ENCODE measurements at regions of chr12 and their contacts with region 1.

Region 1: DNA sequence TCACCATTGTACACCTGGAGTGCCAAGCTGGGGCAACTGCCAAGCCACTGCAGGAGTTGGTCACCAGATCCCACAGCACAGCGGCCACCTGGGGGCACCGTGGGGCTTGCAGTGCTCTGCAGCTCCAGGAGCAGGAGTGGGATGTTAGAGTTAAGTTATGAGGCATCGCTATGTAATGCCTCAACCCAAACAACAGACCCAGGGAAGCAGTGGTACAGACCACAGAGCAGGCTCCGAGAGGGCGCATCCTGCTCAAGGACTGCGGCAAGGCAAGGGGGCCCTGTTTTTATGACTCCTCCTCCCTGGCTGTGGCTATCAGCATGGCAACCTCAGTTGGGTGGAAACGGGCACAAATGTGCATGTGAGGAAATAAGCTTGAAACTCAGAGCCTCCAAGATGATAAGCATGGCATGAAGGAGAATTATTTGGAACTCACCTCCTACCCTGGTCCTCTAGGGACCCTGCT is 63.1 kb downstream of the ARL6IP4 start:
- DNase-seq: peak; percentile 75 to 86
- ATAC-seq: peak; percentile 85 to 94
- H3K4me3 ChIP-seq: no peak overlapping the region
- H3K27ac ChIP-seq: peak overlapping the region in 1 of 4 donors; percentile 19
- H3K4me1 ChIP-seq: peaks cover 11 to 16% of the 10 kb centered on the region in 2 donors
- H3K27me3 ChIP-seq: no peaks in the 10 kb centered on the region
- CTCF ChIP-seq: peak; percentile 54 to 87 (median 73)
- POLR2A ChIP-seq: no peak

Region 2: GRCh38 chr12:122813310-122813713 is 230.3 kb before region 1 on chr12:
- in situ Hi-C with region 1: no loop called
- intact Hi-C with region 1: no loop called
- DNase-seq: no peak
- ATAC-seq: no peak
- H3K4me3 ChIP-seq: no peak overlapping the region
- H3K27ac ChIP-seq: no peak overlapping the region
- H3K4me1 ChIP-seq: no peaks in the 10 kb centered on the region
- H3K27me3 ChIP-seq: no peaks in the 10 kb centered on the region
- CTCF ChIP-seq: no peak
- POLR2A ChIP-seq: no peak

Region 3: DNA sequence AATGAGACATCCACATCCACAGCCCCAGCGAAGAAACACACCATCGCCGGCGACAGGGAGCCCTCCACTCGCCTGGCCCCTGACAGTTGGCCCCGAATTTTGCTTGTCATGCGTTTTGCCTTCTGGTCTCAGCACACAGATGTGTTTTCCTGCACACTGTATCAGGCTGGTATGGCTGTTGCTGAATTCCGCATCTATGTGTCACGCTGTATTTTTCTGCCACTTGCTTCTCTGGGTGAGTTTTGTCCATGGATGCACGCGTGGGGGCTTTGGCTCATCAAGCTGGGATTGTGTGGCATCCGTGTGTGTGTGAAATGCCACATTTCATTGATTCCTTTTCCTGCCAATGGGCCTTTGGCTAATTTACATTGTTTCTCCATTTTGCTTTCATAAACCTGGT is 36.6 kb before region 1 on chr12:
- in situ Hi-C with region 1: no loop called
- intact Hi-C with region 1: no loop called
- DNase-seq: no peak
- ATAC-seq: no peak
- H3K4me3 ChIP-seq: no peak overlapping the region
- H3K27ac ChIP-seq: no peak overlapping the region
- H3K4me1 ChIP-seq: no peaks in the 10 kb centered on the region
- H3K27me3 ChIP-seq: no peaks in the 10 kb centered on the region
- CTCF ChIP-seq: no peak
- POLR2A ChIP-seq: no peak

Region 4: DNA sequence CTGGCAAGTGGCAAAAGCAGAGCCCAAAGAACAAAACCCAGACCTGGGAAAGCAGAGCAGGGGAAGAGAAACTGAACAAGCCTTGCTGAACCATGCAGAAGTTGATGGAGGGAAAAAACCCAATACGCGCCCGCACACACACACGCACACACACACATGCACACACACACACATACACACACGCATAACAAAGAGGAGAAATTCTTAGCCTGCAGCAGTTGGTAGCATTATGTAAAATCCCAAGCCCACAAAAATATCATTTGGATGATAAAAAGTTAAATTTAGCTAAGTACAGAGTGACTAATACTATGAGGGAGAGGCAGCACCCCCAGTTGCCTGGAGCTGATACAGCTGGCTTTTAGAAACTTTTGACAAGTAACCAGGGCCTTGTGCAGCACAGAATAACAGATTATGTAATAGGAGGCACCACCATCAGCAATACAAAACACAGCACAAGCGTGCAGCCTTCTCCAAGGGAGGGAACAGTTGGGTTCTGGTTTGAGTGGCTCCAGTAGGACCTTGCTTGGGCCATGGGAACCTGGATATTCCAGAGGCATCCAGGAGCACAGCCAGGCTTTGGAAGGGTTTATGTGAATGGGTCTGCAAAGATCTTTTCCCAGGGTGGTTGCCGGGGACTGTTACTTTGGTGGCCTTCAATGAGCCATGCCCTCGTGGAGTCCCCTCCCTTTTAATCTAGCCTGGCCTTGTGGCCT is 72.0 kb after region 1 on chr12:
- in situ Hi-C with region 1: no loop called
- intact Hi-C with region 1: no loop called
- DNase-seq: peak; percentile 38 to 64
- ATAC-seq: peak; percentile 91 to 93
- H3K4me3 ChIP-seq: no peak overlapping the region
- H3K27ac ChIP-seq: peak overlapping the region; percentile 44 to 68 (median 53)
- H3K4me1 ChIP-seq: peaks cover 21 to 26% of the 10 kb centered on the region in 2 donors
- H3K27me3 ChIP-seq: no peaks in the 10 kb centered on the region
- CTCF ChIP-seq: no peak
- POLR2A ChIP-seq: no peak

Region 5: DNA sequence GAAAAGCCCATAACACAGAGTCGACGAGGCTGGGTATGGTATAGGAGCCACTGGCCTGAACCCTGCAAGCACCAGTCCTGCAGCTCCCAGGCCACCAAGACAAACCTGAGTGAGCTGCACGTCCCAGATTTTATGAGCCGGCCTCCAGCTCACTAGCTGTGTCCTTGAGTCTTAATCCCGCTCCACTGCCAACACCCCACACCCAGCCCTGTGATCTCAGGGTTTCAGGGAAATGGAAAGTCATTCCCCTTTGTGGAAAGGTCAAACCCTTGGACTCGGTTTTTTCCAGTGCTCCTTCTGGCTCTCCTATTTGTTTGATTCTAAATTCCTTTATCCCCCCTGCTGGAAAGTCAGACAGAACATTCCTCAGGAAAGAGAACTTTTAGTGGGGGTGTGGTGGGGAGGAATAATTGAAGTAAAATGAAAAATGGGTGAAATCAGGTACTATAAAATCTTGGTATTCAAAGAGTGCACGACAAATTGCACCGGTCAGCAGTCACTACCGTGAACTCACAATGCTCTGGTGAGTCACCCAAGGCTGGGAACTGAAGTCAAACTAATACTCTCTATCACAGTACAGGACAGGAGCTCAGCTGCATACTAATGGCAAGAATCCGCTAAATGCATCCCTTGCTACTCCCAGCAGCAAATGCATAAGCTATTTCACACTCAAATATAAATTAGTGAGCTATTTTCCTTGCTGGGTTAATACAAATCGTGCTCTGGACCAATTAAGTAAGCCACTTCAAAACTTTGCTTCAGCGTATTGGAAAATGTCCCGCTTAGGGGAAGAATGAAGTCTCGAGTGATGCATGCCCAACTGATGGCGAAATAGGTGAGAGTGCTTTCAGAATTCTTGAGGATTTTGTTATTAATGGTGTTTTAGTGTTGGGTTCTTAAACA is 98.3 kb after region 1 on chr12:
- in situ Hi-C with region 1: loop called (anchors 5 to 10 kb)
- intact Hi-C with region 1: no loop called
- DNase-seq: peak in 1 of 2 donors; percentile 38
- ATAC-seq: peak; percentile 84 to 93
- H3K4me3 ChIP-seq: no peak overlapping the region
- H3K27ac ChIP-seq: peak overlapping the region; percentile 55 to 68 (median 61)
- H3K4me1 ChIP-seq: peaks cover 26 to 34% of the 10 kb centered on the region in 2 donors
- H3K27me3 ChIP-seq: no peaks in the 10 kb centered on the region
- CTCF ChIP-seq: no peak
- POLR2A ChIP-seq: no peak

Region 6: DNA sequence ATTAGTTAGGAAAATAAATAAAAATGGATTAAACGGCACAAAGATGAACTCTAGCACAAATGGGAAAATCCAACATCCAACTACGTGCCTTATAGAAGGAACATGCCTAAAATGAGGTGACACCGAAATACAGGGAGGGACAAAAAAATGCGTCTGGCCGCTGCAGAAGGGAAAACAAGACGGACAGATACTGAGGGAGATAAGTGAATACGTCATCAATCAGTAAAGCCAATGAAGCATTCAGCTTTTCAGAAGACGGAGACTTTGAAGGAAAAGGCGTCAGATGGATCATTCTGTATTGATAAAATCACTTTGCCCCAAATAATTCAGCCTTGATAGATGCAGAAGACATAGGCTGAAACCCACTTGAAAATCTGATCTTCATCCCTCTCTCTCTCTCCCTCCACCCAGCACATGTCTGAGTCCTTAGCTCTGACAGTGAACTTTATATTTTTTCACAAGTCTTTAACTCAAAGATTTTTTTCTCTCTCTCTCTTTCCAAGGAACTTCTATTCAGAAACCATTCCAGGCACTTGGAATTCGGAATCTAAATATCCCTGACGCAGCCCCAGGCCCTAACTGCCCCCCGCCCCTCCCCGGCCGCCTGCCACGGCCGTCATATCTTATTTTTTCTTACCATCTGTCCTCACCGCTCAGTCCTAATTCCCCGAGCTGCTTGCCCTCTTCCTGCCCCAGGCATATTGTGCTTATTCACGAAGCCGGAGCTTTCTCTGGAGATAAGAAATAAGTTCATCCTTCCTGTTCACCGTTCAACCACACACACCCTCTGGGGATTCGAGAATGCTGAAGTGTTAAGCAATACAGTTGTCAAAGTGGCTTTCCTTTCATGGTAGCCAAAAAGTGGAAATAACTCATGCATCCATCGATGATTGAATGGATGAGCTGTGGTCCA is 1215.8 kb after region 1 on chr12:
- in situ Hi-C with region 1: no loop called
- intact Hi-C with region 1: no loop called
- DNase-seq: no peak
- ATAC-seq: no peak
- H3K4me3 ChIP-seq: no peak overlapping the region
- H3K27ac ChIP-seq: no peak overlapping the region
- H3K4me1 ChIP-seq: no peaks in the 10 kb centered on the region
- H3K27me3 ChIP-seq: peaks cover 0 to 11% (median 3%) of the 10 kb centered on the region in 3 donors
- CTCF ChIP-seq: no peak
- POLR2A ChIP-seq: no peak

Measured in gastrocnemius medialis (tissue), 4 donors.